Heart right ventricle (tissue), 16 donors: ENCODE measurements at regions of chr13 and their contacts with region 1.

Region 1: DNA sequence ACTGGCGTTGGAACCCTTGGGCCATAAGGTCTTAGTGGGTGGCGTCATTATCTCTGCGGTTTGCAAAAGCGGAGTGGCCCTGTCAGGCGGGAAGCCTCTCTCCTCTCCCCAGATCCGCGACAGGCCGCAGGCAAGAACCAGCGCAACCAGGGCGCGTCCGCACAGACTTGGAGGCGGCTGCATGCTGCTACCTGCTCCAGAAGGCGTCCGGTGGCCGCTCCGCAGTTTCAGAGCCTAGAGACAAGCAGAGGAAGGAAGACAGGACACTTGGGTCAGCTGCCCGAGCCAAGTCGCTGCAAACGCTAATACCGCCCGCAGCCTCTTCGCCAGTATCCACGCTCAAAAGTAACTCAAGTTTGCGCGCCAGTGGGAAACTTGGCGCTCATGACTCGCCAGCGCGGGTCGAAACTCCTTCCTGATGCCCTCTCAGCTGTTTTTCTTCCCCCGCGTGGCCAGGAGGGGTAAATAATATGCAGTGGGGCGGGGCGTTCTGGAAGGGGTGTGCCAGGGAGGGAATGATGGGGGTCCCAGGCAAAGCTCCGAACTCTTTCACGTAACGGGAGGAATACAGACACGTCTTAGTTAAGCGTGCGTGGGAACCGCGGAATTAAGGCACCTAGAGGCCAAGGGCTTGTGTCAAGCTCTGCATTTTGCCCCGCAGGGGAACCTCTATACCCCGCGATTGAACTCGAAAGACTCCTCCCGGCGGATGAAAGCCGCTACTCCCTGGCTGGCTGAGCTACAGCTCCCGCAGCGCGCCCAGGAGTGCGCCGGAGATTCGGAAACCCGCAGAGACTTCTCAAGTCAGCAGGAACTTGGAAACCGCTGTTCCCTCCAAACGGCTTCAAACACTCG is at the start of gene EDNRB:
- DNase-seq: peak; percentile 56 to 72
- ATAC-seq: peak; percentile 63 to 84 (median 74)
- H3K4me3 ChIP-seq: peak within 1 kb of the TSS; percentile 37 to 75 (median 68)
- H3K27ac ChIP-seq: peak within 1 kb of the TSS; percentile 60 to 87 (median 79)
- H3K4me1 ChIP-seq: peaks cover 0 to 24% (median 6%) of the 10 kb centered on the region in 9 donors
- H3K27me3 ChIP-seq: peaks cover 0 to 31% (median 0%) of the 10 kb centered on the region in 7 donors
- CTCF ChIP-seq: peak in 5 of 9 donors; percentile 12 to 36 (median 18)
- total RNA-seq, gene EDNRB: 9.3 to 61.9 (median 19.6) TPM

Region 2: GRCh38 chr13:77779552-77780272 is 138.9 kb before region 1 on chr13:
- intact Hi-C with region 1: loop called in 2 of 10 experiments (anchors 2 to 10 kb)
- DNase-seq: peak in 1 of 2 donors; percentile 59
- ATAC-seq: peak in 7 of 8 donors; percentile 41 to 84 (median 67)
- H3K4me3 ChIP-seq: no peak overlapping the region
- H3K27ac ChIP-seq: peak overlapping the region in 1 of 10 donors; percentile 34
- H3K4me1 ChIP-seq: peaks cover 0 to 9% (median 0%) of the 10 kb centered on the region in 9 donors
- H3K27me3 ChIP-seq: no peaks in the 10 kb centered on the region
- CTCF ChIP-seq: peak; percentile 53 to 85 (median 76)

Region 3: DNA sequence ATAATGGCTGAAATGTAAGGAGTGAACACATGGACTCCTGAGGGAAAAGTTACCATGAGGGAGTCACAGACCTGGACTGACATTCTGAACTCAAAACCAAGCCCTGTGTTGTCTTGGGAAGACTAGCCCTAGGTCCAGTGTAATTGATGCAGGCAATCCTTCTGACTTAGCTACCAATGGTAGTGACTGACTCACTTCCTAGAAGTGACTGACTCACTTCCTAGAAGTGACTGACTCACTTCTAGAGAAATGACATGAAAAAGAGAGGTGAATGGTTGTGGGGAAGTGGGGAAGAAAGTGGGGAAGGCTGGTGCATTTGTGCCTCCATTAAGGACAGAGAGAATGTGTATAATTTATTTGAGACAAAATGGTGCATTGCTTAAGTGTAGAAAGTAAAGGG is 49.9 kb before region 1 on chr13:
- intact Hi-C with region 1: no loop called
- DNase-seq: no peak
- ATAC-seq: no peak
- H3K4me3 ChIP-seq: no peak overlapping the region
- H3K27ac ChIP-seq: no peak overlapping the region
- H3K4me1 ChIP-seq: no peaks in the 10 kb centered on the region
- H3K27me3 ChIP-seq: no peaks in the 10 kb centered on the region
- CTCF ChIP-seq: no peak

Region 4: DNA sequence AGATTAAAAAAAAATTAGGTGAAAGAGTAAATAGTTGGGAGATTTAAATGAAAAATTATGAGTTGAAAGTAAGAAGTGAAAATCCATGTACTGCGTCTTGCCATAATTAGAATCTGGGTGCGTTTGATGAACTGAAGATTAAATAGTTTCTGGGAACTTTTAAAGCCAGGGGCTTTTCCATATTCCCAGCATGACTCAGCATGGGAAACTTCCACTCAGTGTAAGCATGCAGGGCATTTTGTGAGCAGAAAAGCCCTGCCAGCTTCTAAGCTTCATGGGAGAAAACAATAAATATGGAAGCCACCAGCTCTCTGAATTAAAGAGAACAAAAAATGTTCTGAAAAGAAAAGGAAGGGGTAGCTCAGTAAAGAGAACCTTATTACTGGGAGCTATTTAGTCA is 62.0 kb after region 1 on chr13:
- intact Hi-C with region 1: loop called in 2 of 10 experiments (anchors 5 kb)
- DNase-seq: peak in 1 of 2 donors; percentile 18
- ATAC-seq: peak in 5 of 8 donors; percentile 38 to 69 (median 63)
- H3K4me3 ChIP-seq: no peak overlapping the region
- H3K27ac ChIP-seq: peak overlapping the region in 4 of 10 donors; percentile 30 to 67 (median 45)
- H3K4me1 ChIP-seq: peaks cover 0 to 24% (median 0%) of the 10 kb centered on the region in 9 donors
- H3K27me3 ChIP-seq: no peaks in the 10 kb centered on the region
- CTCF ChIP-seq: no peak

Region 5: DNA sequence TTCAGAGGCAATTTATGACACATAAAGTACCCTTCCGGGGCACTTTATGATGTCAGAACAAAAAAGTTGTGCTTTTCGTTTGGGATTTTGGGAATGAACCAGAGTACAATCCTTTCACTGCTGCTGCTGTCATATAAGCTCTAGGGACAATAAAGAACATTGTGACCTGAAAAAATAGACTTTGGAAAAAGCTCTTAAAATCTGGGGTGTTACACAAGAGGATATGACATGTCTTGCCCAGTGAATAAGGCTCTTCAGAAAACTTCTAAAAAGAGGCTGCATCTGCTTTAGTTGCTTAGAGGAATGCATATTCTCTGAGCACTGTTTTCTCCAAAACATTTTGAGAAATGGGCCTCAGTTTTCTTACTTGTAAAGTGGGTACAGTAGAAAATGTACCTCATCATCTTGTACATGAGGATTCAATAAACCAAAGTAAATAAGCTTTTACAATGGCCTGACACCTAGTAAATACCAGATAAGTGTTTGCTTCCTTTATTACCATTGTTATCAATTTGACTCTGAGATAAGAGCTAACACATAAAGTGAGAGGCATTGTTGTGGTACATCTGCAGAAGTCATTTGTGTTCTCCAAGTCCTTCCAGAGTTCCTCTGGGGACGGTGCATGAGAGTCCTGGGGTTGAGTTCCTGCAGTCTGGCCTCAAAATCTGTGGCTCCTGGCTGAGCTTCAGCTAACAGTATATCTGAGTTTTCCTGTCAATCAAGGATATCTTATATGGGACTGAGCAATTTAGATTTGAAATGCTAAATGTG is 67.4 kb after region 1 on chr13:
- intact Hi-C with region 1: loop called in 2 of 10 experiments (anchors 5 kb)
- DNase-seq: peak in 1 of 2 donors; percentile 19
- ATAC-seq: peak; percentile 62 to 84 (median 70)
- H3K4me3 ChIP-seq: no peak overlapping the region
- H3K27ac ChIP-seq: peak overlapping the region in 1 of 10 donors; percentile 23
- H3K4me1 ChIP-seq: peaks cover 0 to 46% (median 9%) of the 10 kb centered on the region in 9 donors
- H3K27me3 ChIP-seq: no peaks in the 10 kb centered on the region
- CTCF ChIP-seq: no peak

Region 6: DNA sequence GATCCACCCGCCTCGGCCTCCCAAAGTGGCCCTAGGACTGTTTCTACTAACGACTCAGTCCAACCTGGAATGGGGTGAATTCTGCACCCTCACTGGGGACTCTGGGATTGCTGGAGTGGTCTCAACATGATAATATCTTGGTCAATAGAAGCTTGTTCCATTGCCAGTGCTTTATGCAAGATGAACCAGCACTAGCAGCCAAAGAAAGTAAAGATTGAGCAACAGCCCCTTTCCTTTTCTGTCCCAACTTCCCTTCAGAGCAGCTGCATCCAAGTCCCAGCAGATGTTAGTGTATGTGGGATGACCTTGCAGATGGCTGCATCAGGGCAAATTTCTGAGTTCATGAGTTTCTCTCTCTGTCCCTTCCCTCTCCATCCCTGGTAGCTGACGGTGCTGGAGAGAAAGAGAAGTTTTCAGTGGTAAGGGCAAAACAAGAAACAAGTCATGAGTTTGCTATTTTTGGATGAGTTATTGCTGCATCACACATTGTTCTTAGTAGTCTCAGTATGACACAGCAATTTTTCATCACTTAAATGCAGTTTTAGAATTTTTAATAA is 183.6 kb after region 1 on chr13:
- intact Hi-C with region 1: loop called in 1 of 10 experiments (anchors 10 kb)
- DNase-seq: peak; percentile 15 to 41
- ATAC-seq: peak; percentile 84 to 98 (median 91)
- H3K4me3 ChIP-seq: no peak overlapping the region
- H3K27ac ChIP-seq: peak overlapping the region in 4 of 10 donors; percentile 6 to 33 (median 25)
- H3K4me1 ChIP-seq: peaks cover 0 to 6% (median 0%) of the 10 kb centered on the region in 9 donors
- H3K27me3 ChIP-seq: no peaks in the 10 kb centered on the region
- CTCF ChIP-seq: no peak

Region 7: GRCh38 chr13:78137404-78138142 is 219.0 kb after region 1 on chr13:
- intact Hi-C with region 1: no loop called
- DNase-seq: no peak
- ATAC-seq: peak; percentile 49 to 85 (median 72)
- H3K4me3 ChIP-seq: no peak overlapping the region
- H3K27ac ChIP-seq: no peak overlapping the region
- H3K4me1 ChIP-seq: peaks cover 0 to 6% (median 0%) of the 10 kb centered on the region in 9 donors
- H3K27me3 ChIP-seq: peaks cover 0 to 3% (median 0%) of the 10 kb centered on the region in 7 donors
- CTCF ChIP-seq: peak; percentile 46 to 79 (median 69)